ENCODE measurements at regions of chr2 and their contacts with region 1.

Region 1: GRCh38 chr2:85132834-85133637 is at the start of gene TCF7L1:
- DNase-seq: peak; percentile 86
- ATAC-seq: peak; percentile 93 to 97 (median 96)
- H3K4me3 ChIP-seq: peak within 1 kb of the TSS; percentile 70 to 97 (median 80)
- H3K27ac ChIP-seq: peak within 1 kb of the TSS; percentile 33 to 90 (median 84)
- H3K4me1 ChIP-seq: peaks cover 0 to 47% (median 40%) of the 10 kb centered on the region in 9 donors
- H3K27me3 ChIP-seq: peaks cover 0 to 54% (median 0%) of the 10 kb centered on the region in 7 donors
- CTCF ChIP-seq: peak; percentile 82 to 96 (median 90)
- total RNA-seq, gene TCF7L1: 4.5 to 10.9 (median 6.3) TPM

Region 2: GRCh38 chr2:85066874-85067351 is 66.1 kb before region 1 on chr2:
- intact Hi-C with region 1: loop called in 7 of 10 experiments (anchors 2 to 10 kb)
- DNase-seq: peak; percentile 73 to 75
- ATAC-seq: peak; percentile 67 to 91 (median 88)
- H3K4me3 ChIP-seq: peak overlapping the region in 8 of 10 donors; percentile 14 to 51 (median 41)
- H3K27ac ChIP-seq: peak overlapping the region in 2 of 10 donors; percentile 24 to 29
- H3K4me1 ChIP-seq: peaks cover 0 to 12% (median 10%) of the 10 kb centered on the region in 9 donors
- H3K27me3 ChIP-seq: peaks cover 0 to 17% (median 0%) of the 10 kb centered on the region in 7 donors
- CTCF ChIP-seq: peak; percentile 75 to 93 (median 87)

Region 3: GRCh38 chr2:85185431-85185940 is 52.5 kb after region 1 on chr2:
- intact Hi-C with region 1: loop called in 1 of 10 experiments (anchors 2 kb)
- DNase-seq: no peak
- ATAC-seq: no peak
- H3K4me3 ChIP-seq: no peak overlapping the region
- H3K27ac ChIP-seq: no peak overlapping the region
- H3K4me1 ChIP-seq: peaks cover 10 to 37% (median 16%) of the 10 kb centered on the region in 9 donors
- H3K27me3 ChIP-seq: no peaks in the 10 kb centered on the region
- CTCF ChIP-seq: no peak

Region 4: GRCh38 chr2:85277416-85278158 is 144.6 kb after region 1 on chr2:
- intact Hi-C with region 1: loop called in 1 of 10 experiments (anchors 5 kb)
- DNase-seq: peak; percentile 56 to 75
- ATAC-seq: peak; percentile 74 to 89 (median 83)
- H3K4me3 ChIP-seq: peak overlapping the region in 5 of 10 donors; percentile 21 to 37 (median 23)
- H3K27ac ChIP-seq: peak overlapping the region in 9 of 10 donors; percentile 7 to 82 (median 72)
- H3K4me1 ChIP-seq: peaks cover 14 to 69% (median 33%) of the 10 kb centered on the region in 9 donors
- H3K27me3 ChIP-seq: no peaks in the 10 kb centered on the region
- CTCF ChIP-seq: no peak

Region 5: DNA sequence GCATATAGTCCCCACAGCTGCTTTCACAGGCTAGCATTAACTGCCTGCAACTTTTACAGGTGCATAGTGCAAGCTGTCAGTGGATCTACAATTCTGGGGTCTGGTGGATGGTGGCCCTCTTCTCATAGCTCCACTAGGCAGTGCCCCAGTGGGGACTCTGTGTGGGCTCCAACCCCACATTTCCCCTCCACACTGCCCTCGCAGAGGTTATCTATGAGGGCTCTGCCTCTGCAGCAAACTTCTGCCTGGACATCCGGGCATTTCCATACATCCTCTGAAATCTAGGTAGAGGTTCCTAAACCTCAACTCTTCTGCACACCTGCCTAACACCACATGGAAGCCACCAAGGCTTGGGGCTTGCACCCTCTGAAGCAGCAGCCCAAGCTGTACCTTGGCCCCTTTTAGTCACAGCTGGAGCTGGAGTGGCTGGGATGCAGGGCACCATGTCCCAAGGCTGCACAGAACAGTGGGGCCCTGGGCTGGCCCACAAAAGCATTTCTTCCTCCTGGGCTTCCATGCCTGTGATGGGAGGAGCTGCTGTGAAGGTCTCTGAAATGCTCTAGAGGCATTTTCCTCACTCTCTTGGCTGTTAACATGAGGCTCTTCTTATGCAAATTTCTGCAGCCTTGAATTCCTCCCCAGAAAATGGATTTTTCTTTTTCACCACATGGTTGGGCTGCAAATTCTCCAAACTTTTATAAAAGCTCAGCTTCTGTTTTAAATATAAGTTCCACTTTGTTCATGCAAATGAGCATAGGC is 1367.5 kb after region 1 on chr2:
- intact Hi-C with region 1: loop called in 1 of 10 experiments (anchors 5 kb)
- DNase-seq: no peak
- ATAC-seq: peak in 1 of 8 donors; percentile 22
- H3K4me3 ChIP-seq: no peak overlapping the region
- H3K27ac ChIP-seq: no peak overlapping the region
- H3K4me1 ChIP-seq: no peaks in the 10 kb centered on the region
- H3K27me3 ChIP-seq: no peaks in the 10 kb centered on the region
- CTCF ChIP-seq: no peak

Measured in heart right ventricle (tissue), 16 donors.